ENCODE measurements at regions of chr2 and their contacts with region 1.

Region 1: GRCh38 chr2:175684457-175684856 is 317.6 kb downstream of the LNPK start:
- DNase-seq: no peak
- H3K4me3 ChIP-seq: no peak overlapping the region
- H3K27ac ChIP-seq: no peak overlapping the region
- H3K4me1 ChIP-seq: no peaks in the 10 kb centered on the region
- H3K27me3 ChIP-seq: no peaks in the 10 kb centered on the region
- CTCF ChIP-seq: no peak
- EP300 ChIP-seq: no peak
- POLR2A ChIP-seq: no peak

Region 2: DNA sequence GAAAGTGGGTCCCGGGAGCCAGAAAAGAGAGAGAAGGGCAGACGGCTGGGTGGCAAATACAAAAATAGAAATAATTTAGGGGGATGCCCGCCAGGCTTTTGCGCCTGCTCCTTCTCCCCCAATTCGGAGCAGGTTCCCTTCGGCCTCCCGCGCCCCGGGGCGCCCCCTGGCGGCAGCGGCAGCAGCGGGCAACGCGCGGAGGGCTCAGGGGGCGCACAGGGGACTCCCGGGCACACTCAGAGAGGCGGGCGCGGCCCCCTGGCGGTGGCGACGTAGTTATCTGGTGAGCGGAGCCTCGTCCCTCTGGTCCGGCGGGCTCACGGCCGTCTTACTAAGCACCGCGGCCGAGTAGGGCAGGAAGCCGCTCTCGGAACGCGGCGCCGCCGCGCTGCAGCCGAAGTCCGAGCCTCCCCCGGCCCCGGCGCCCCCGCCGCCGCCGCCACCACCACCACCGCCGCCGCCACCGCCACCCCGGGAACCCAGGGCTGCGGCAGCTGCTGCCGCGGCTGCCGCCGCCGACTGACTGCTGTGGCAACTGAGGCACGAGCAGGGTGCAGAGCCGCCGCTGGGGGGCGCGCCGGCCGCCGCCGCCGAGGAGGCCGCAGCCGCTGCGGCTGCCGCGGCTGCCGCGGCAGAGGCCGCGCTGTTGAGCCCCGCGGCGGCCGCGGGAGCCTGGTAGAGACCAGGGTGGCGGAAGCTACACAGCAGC is 395.5 kb after region 1 on chr2:
- intact Hi-C with region 1: loop called in 2 of 4 experiments (anchors 10 kb)
- DNase-seq: no peak
- H3K4me3 ChIP-seq: no peak overlapping the region
- H3K27ac ChIP-seq: no peak overlapping the region
- H3K4me1 ChIP-seq: peaks cover 3% of the 10 kb centered on the region
- H3K27me3 ChIP-seq: peaks cover 20% of the 10 kb centered on the region
- CTCF ChIP-seq: no peak
- EP300 ChIP-seq: no peak
- POLR2A ChIP-seq: no peak

Region 3: DNA sequence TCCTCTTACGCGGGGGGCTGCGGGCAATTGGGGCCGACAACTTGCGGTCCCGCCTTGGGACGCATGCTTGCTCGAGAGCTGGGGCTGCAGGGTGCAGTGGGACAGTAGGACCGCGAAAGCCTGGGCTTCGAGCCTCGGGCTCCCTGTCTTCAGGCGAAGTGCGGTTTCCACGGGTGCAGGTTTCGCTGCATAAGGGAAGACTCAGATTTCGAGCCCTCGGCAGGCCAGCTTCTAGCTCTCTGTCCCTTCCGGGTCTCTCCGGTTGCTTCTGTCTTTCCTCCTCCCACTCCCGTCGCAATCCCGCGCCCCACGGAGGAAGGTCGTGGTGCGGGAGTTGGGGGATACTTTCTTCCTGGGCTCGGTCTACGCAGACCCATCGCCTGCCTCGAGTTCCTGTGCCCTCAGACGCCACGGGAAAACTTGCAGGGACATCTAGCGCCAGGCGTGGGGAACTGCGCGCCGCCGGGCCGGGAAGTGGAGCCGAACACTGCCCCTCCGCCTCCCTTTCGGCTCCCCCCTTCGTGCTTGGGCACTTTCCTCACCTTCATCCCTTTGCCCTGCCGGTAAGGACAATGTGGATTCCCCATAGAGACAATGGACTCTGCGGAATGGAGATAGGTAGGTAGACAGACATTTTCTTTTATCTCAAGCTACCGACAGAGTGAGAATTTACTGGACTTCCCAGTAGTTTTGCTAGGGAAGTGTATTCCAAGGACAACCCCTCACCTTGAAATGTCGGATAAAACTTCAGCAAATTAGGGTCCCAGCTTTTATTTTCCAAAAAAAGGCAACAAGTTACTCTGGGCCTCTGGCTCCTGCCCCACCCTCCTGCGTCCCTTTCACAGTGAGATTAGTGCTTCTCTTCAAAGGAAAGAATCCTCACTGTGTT is 403.8 kb after region 1 on chr2:
- intact Hi-C with region 1: loop called in 2 of 4 experiments (anchors 10 kb)
- DNase-seq: peak in 3 of 5 donors; percentile 41 to 65 (median 51)
- H3K4me3 ChIP-seq: no peak overlapping the region
- H3K27ac ChIP-seq: no peak overlapping the region
- H3K4me1 ChIP-seq: peaks cover 6% of the 10 kb centered on the region
- H3K27me3 ChIP-seq: peaks cover 7% of the 10 kb centered on the region
- CTCF ChIP-seq: peak in 1 of 3 donors; percentile 44
- EP300 ChIP-seq: no peak
- POLR2A ChIP-seq: no peak

Region 4: DNA sequence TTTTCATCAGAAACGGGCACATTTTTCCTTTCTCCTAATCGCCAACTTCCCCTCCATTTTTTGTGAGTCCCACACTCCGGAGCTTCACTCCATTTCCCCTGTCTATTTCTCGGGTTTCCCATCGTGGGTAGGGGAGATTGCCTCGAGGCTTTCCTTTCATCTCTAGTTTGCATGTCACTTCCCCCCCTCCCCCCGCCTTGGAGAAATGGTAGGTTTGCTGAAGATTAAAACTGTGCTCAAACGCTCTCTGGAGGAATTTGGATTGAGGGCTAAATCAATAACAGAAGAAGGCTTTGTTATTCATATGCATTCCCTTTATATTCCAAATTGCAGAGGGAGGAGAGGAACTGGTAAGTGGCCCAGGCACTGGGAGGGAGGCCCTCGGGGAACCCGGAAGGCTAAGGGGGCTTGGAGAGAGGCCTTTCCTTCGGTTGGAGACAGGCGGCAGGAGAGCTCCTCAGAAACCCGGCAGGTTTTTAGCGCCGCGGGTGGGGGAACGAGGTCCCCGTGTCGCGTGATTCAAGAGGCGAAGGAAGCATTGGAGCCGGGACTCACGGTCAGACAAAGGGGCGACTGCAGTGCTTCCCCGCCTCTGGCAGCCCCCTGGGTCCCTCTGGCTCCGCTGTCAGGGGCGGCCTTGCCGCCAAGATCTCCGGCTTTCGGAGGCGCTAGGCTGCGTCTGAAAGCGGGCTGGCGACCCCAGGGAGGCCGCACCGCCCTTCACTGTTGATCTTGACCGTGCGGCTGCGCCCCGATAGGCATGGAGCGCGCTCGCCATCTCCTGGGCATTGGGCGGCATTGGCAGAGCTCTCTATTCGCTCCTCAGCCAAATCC is 412.7 kb after region 1 on chr2:
- intact Hi-C with region 1: loop called in 2 of 4 experiments (anchors 5 to 10 kb)
- DNase-seq: peak; percentile 34 to 76 (median 58)
- H3K4me3 ChIP-seq: no peak overlapping the region
- H3K27ac ChIP-seq: no peak overlapping the region
- H3K4me1 ChIP-seq: peaks cover 3% of the 10 kb centered on the region
- H3K27me3 ChIP-seq: peaks cover 25% of the 10 kb centered on the region
- CTCF ChIP-seq: peak; percentile 25 to 59 (median 45)
- EP300 ChIP-seq: no peak
- POLR2A ChIP-seq: no peak

Region 5: DNA sequence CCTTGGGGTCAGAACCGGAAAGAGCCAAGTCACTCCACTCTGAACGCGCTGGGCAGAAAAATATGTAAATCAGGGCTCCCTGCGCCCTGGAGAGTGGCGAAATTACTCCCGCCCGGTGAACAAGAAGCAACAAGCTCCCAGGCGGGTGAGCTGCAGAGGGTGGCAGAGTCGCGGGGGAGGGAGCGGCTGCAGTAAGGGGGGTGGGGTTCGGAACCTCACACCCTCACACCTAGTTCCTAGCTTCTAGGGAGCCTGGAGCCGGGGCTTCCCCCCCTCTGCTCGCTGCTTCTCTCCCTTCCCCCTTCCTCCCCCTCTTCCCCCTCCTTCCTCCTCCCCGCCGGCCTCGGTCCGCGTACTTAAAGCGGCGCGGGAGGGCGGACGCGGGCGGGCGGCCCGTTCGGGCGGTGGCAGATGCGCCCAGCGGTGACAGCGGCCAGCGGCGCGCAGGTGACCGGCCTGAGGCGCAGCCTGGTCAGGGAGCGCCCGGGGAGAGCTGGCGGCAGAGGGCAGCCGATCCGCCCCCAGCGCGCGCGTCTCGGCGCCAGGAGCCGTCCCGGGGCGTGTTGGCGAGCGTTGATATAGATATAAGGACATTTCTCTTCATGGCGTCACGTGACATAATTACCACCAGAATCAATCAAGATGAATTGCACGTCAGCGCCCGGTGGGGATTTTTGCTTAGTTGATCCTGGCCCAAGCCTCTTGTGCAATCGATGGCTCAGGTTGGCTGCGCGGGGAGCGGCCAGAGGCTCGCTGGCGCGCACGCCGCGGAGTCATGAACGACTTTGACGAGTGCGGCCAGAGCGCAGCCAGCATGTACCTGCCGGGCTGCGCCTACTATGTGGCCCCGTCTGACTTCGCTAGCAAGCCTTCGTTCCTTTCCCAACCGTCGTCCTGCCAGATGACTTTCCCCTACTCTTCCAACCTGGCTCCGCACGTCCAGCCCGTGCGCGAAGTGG is 422.4 kb after region 1 on chr2 and contains the start of gene HOXD11:
- intact Hi-C with region 1: loop called in 1 of 4 experiments (anchors 5 kb)
- DNase-seq: peak in 2 of 5 donors; percentile 36 to 53
- H3K4me3 ChIP-seq: peak within 1 kb of the TSS; percentile 43
- H3K27ac ChIP-seq: no peak within 1 kb of the TSS
- H3K4me1 ChIP-seq: peaks cover 5% of the 10 kb centered on the region
- H3K27me3 ChIP-seq: peaks cover 1% of the 10 kb centered on the region
- CTCF ChIP-seq: no peak
- EP300 ChIP-seq: no peak
- POLR2A ChIP-seq: no peak
- total RNA-seq, gene HOXD11: 0.61 to 1.3 (median 1.1) TPM in 3 of 7 donors, not detected in the others